MCF 10A (cell line): ENCODE measurements at regions of chr7 and their contacts with region 1.

Region 1: GRCh38 chr7:117212969-117213877 is 109.6 kb downstream of the WNT2 start:
- DNase-seq: peak; percentile 73
- H3K4me3 Mint-ChIP-seq: no peak overlapping the region
- H3K27ac Mint-ChIP-seq: no peak overlapping the region
- H3K4me1 Mint-ChIP-seq: no peaks in the 10 kb centered on the region
- H3K27me3 Mint-ChIP-seq: no peaks in the 10 kb centered on the region
- CTCF ChIP-seq: peak; percentile 89

Region 2: DNA sequence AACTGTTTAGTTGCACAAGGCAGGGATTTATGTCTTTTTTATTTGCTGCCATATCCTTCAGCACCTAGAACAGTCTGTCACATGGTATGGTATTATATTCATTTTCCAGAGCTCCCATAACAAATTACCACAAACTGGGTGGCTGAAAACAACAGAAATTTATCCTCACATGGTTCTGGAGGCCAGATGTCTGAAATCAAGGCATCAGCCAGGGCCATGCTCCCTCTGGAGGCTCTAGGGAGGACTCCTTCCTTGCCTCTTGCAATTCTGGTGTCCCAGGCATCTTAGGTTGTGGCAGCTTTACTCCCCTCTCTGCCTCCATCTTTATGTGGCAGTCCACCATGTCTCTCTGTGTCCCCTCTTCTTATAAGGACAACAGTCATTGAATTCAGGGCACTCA is 498.1 kb before region 1 on chr7:
- CTCF ChIA-PET with region 1: no interaction called
- POLR2A ChIA-PET with region 1: no interaction called
- intact Hi-C with region 1: no loop called
- DNase-seq: no peak
- H3K4me3 Mint-ChIP-seq: no peak overlapping the region
- H3K27ac Mint-ChIP-seq: peak overlapping the region; percentile 84
- H3K4me1 Mint-ChIP-seq: peaks cover 43% of the 10 kb centered on the region
- H3K27me3 Mint-ChIP-seq: no peaks in the 10 kb centered on the region
- CTCF ChIP-seq: no peak

Region 3: GRCh38 chr7:117123311-117123926 is 89.8 kb before region 1 on chr7:
- CTCF ChIA-PET with region 1: no interaction called
- POLR2A ChIA-PET with region 1: no interaction called
- intact Hi-C with region 1: no loop called
- DNase-seq: no peak
- H3K4me3 Mint-ChIP-seq: no peak overlapping the region
- H3K27ac Mint-ChIP-seq: no peak overlapping the region
- H3K4me1 Mint-ChIP-seq: peaks cover 12% of the 10 kb centered on the region
- H3K27me3 Mint-ChIP-seq: no peaks in the 10 kb centered on the region
- CTCF ChIP-seq: no peak

Region 4: GRCh38 chr7:117202511-117202910 is 10.7 kb before region 1 on chr7:
- CTCF ChIA-PET with region 1: interaction called, 42 read pairs
- POLR2A ChIA-PET with region 1: no interaction called
- intact Hi-C with region 1: no loop called
- DNase-seq: peak; percentile 59
- H3K4me3 Mint-ChIP-seq: no peak overlapping the region
- H3K27ac Mint-ChIP-seq: no peak overlapping the region
- H3K4me1 Mint-ChIP-seq: peaks cover 7% of the 10 kb centered on the region
- H3K27me3 Mint-ChIP-seq: no peaks in the 10 kb centered on the region
- CTCF ChIP-seq: no peak

Region 5: GRCh38 chr7:117338020-117338419 is 124.8 kb after region 1 on chr7:
- CTCF ChIA-PET with region 1: interaction called, 22 read pairs
- POLR2A ChIA-PET with region 1: no interaction called
- intact Hi-C with region 1: loop called (anchors 1 kb)
- DNase-seq: peak; percentile 6
- H3K4me3 Mint-ChIP-seq: no peak overlapping the region
- H3K27ac Mint-ChIP-seq: no peak overlapping the region
- H3K4me1 Mint-ChIP-seq: no peaks in the 10 kb centered on the region
- H3K27me3 Mint-ChIP-seq: peaks cover 80% of the 10 kb centered on the region
- CTCF ChIP-seq: no peak

Region 6: DNA sequence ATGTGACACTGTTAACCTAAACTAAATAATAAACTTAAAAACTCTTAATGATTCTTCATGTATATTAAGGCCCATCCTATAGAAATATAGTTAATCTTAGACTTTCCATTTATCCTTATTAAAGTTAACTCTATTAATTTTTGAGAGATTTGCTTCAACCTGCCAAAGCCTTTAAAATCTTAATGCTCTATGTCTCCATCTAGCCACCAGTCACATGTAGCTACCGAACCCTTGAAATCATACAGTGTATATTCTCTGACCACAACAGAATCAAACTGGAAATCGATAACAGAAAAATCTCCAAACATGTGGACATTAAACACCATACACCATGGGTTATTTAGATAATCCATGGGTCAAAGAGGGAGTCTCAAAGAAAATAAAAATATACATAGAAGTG is 162.2 kb after region 1 on chr7:
- CTCF ChIA-PET with region 1: interaction called, 10 read pairs
- POLR2A ChIA-PET with region 1: no interaction called
- intact Hi-C with region 1: no loop called
- DNase-seq: peak; percentile 3
- H3K4me3 Mint-ChIP-seq: no peak overlapping the region
- H3K27ac Mint-ChIP-seq: no peak overlapping the region
- H3K4me1 Mint-ChIP-seq: no peaks in the 10 kb centered on the region
- H3K27me3 Mint-ChIP-seq: peaks cover 79% of the 10 kb centered on the region
- CTCF ChIP-seq: peak; percentile 8

Region 7: DNA sequence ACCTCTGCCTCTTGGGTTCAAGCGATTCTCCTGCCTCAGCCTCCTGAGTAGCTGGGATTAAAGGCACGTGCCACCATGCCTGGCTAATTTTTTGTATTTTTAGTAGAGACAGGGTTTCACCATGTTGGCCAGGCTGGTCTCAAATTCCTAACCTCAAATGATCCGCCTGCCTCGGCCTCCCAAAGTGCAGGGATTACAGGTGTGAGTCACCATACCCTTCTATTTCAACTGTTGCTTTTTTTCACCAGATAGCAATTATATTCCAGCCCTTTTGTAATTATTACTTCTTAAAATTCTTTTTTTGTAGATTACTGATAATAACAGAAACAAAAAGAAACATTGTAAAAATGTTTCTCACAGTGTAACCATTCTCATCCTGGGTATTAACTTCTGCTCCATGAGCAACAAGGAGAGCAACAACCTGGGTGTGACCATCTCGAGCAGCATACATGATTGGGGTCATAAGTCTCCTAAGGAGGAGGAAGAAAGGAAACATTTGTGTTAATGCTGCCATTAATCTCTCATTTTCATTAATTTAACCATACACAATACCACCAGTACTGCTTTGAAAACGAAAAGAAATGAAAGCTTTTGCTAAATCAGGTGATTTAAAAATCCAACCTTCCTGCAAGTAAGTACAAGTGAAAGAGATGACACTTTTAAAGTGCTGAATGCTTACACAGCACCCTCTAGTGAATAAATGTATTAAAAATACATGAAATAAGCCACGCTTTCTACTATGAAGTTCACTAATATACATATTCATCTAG is 172.3 kb after region 1 on chr7:
- CTCF ChIA-PET with region 1: interaction called, 29 read pairs
- POLR2A ChIA-PET with region 1: no interaction called
- intact Hi-C with region 1: loop called (anchors 1 kb)
- DNase-seq: peak; percentile 16
- H3K4me3 Mint-ChIP-seq: no peak overlapping the region
- H3K27ac Mint-ChIP-seq: no peak overlapping the region
- H3K4me1 Mint-ChIP-seq: no peaks in the 10 kb centered on the region
- H3K27me3 Mint-ChIP-seq: peaks cover 57% of the 10 kb centered on the region
- CTCF ChIP-seq: peak; percentile 35